Endothelial cell of umbilical vein (primary cell): ENCODE measurements at regions of chr10 and their contacts with region 1.

Region 1: DNA sequence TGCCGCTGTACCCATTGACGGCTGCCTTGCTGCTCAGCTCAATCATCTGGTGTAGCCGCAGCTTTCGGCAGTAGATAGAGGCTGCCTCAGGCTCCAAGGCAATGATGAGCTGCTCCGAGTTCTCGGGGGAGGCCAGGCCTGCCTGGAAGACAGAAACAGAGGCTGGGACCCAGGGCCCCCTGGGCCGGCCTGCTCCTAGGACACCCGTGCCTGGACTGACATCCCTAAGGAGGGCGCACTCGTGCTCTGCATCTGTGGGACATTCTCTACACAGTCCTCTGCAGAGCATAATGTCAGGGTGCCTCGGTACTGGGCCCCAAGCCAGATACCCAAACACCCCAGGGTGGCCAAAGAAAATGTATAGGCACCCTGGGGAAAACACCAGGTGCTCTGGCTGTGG is 58.5 kb downstream of the HSPA12A start:
- DNase-seq: no peak
- H3K4me3 ChIP-seq: no peak overlapping the region
- H3K27ac ChIP-seq: no peak overlapping the region
- H3K4me1 ChIP-seq: no peaks in the 10 kb centered on the region
- H3K27me3 ChIP-seq: no peaks in the 10 kb centered on the region
- CTCF ChIP-seq: no peak
- POLR2A ChIP-seq: no peak

Region 2: GRCh38 chr10:116742367-116743265 is 58.8 kb after region 1 on chr10 and contains the start of gene HSPA12A:
- CTCF ChIA-PET with region 1: no interaction called
- POLR2A ChIA-PET with region 1: no interaction called
- dilution Hi-C with region 1: no loop called
- intact Hi-C with region 1: loop called (anchors 5 kb)
- DNase-seq: peak; percentile 62
- H3K4me3 ChIP-seq: peak within 1 kb of the TSS; percentile 29 to 34 (median 31)
- H3K27ac ChIP-seq: no peak within 1 kb of the TSS
- H3K4me1 ChIP-seq: peaks cover 7% of the 10 kb centered on the region
- H3K27me3 ChIP-seq: peaks cover 18 to 21% of the 10 kb centered on the region in 2 experiments
- CTCF ChIP-seq: no peak
- POLR2A ChIP-seq: no peak
- total RNA-seq, gene HSPA12A: 0.22 and 0.30 TPM in 2 replicates

Region 3: DNA sequence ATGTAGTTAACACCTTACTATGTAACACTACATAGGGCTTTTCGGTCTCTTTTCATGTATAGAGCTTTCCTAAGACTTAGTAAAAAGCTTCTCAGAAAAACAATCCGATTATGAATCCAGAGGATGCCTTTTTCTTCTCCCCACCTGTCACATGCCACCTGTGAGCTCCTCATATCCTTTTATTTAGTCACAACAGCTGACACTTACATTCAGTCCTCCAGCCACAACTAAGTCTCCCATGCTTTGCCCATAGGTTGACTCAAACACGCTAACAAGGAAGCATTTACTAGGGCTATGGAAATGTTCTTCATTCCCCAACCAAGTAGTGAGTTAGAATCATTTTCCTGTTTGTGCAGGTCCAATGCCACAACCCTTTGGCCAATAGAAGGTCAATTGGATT is 173.3 kb after region 1 on chr10:
- CTCF ChIA-PET with region 1: no interaction called
- POLR2A ChIA-PET with region 1: no interaction called
- dilution Hi-C with region 1: no loop called
- intact Hi-C with region 1: no loop called
- DNase-seq: no peak
- H3K4me3 ChIP-seq: no peak overlapping the region
- H3K27ac ChIP-seq: no peak overlapping the region
- H3K4me1 ChIP-seq: no peaks in the 10 kb centered on the region
- H3K27me3 ChIP-seq: no peaks in the 10 kb centered on the region
- CTCF ChIP-seq: no peak
- POLR2A ChIP-seq: no peak